Astrocyte of the cerebellum (primary cell): ENCODE measurements at regions of chr9 and their contacts with region 1.

Region 1: GRCh38 chr9:121954477-121955140 is 138.5 kb downstream of the TTLL11 start:
- DNase-seq: peak; percentile 90
- H3K4me3 ChIP-seq: no peak overlapping the region
- CTCF ChIP-seq: no peak

Region 2: DNA sequence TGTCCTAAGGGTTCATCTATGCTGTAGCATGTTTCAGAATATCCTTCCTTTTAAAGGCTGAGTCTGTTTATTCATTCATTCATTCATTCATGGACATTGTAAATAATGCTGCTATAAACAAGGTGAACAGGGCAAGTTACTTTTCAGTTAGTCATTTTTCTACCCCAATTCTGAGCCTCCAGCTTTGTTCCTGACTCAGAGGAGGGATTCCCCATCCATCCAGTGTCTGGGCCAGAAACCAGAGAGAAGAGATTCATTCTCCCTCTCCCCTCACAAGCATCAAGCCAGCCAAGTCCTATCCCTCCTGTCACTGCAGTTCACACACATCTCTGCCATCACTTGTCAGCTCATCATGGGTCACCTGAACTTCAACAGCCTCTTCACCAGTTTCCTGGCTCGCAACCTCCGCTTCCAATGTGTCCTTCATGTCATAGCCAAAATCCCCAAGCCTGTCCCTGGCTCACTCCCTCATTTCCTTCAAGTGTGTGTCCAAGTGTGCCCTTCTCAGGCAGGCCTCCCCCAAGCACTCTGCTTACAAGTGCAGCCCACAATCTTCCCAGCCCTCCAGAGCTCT is 64.5 kb before region 1 on chr9:
- in situ Hi-C with region 1: loop called (anchors 5 kb)
- DNase-seq: no peak
- H3K4me3 ChIP-seq: no peak overlapping the region
- CTCF ChIP-seq: no peak